Activated naive CD4-positive, alpha-beta T cell treated with anti-CD3 and anti-CD28 coated beads for 36 hours (primary cell): ENCODE measurements at regions of chr3 and their contacts with region 1.

Region 1: DNA sequence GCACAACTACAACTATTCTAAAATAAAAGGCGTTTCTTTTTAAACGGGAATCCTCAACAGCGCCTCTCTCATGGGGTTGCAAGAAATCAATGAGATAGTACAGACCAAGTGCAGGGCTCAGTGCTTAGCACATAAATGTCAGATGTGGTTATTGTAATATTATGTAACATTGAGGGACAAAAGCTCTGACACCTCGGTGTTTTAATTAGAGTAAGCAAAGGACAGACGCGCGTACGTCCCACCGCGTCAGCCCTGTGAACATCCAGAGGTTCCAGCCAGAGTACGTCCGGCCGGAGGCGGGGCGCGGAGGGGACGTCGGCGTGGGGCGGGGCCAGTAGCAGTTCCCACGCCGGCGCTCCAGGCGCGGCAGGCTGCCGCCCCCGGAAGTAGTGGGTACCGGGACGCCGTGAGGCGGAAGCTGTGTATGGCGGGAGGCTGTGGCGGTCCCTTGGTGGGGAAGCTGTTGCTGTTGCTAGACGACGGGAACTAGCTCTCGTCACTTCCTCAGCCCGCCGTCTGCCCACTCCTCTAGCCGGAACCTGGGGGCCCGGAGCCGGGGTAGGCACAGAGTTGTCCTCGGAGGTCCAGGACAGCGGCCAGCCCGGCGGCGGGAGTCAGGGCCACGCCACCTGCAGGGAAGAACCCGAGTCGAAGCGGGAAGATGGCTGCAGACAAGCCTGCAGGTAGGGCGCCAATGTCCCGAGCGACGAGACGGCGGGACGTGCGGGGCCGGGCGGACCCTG is at the start of gene CNOT10:
- DNase-seq: peak; percentile 97
- H3K4me3 Mint-ChIP-seq: peak within 1 kb of the TSS; percentile 90
- H3K27ac Mint-ChIP-seq: peak within 1 kb of the TSS; percentile 86
- H3K4me1 Mint-ChIP-seq: peaks cover 32% of the 10 kb centered on the region
- H3K27me3 Mint-ChIP-seq: no peaks in the 10 kb centered on the region
- total RNA-seq, gene CNOT10: 40.6 to 46.5 TPM

Region 2: DNA sequence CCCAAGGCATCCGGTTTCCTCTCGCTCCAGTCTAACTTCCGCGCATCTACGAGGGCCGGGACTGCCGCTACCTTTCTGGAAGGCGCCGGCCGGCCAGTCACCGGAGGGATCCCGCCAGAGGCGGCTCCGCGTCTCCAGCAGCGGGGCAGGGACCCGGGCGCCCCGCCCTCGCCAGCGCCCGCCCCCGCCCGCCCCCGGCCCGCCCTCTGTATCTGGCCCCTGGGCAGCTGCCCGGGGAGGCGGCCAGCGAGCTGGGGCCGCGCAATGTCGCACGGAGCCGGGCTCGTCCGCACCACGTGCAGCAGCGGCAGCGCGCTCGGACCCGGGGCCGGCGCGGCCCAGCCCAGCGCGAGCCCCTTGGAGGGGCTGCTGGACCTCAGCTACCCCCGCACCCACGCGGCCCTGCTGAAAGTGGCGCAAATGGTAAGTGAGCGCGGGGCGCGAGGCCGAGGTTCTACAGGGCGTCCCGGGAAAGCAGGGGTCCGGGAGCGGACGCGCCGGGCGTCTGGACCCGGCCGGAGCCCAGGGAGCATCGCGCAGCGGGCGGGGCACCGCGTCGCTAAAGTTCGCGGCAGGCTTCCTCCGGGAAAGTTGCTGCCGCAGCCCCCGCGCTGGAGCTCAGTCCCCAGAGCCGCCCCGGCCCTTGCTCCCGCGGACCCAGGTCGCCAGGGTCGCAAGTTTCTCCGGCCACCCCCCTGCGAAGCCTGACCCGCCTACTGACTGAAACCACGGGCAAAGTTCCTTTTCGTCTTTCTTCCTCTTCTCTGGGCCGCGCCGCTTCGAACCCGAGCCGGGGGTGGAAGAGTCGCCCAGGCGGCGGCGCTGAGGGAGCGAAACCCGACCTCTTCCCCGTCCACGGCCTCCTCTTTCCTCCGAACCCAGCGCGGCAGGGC is 293.1 kb before region 1 on chr3 and contains the start of gene CMTM7:
- CTCF ChIA-PET with region 1: no interaction called
- intact Hi-C with region 1: loop called (anchors 10 kb)
- DNase-seq: peak; percentile 82
- H3K4me3 Mint-ChIP-seq: peak within 1 kb of the TSS; percentile 95
- H3K27ac Mint-ChIP-seq: peak within 1 kb of the TSS; percentile 93
- H3K4me1 Mint-ChIP-seq: peaks cover 54% of the 10 kb centered on the region
- H3K27me3 Mint-ChIP-seq: no peaks in the 10 kb centered on the region
- total RNA-seq, gene CMTM7: 59.1 to 60.2 TPM

Region 3: DNA sequence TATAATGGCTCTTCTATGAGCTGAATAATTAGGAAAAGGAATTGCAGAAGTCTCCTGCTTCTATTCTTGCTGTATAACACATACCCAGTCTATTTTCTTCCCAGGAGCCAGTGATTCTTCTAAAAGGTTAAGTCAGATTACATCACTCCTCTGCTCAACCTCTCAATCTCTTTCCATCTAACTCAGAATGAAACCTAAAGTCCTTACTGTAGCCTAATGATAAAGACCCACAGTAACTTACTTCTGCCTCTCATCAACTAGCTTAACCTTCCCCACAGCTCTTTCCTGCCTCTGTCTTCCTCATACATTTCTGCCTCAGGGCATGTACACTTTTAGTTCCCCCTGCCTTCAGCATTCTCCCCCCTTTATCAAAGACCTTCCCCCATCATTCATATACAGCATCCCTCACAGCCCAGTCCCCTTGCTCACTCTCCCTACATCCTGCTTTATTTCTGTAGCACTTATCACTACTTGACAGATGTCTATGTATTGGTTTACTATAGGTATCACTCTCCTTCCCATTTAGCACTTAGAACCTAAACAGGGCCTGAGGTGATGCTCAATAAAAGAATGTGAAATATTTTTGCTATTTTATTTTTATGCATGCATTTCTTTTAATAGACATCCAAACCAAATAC is 153.8 kb before region 1 on chr3:
- CTCF ChIA-PET with region 1: no interaction called
- intact Hi-C with region 1: no loop called
- DNase-seq: no peak
- H3K4me3 Mint-ChIP-seq: no peak overlapping the region
- H3K27ac Mint-ChIP-seq: peak overlapping the region; percentile 59
- H3K4me1 Mint-ChIP-seq: peaks cover 11% of the 10 kb centered on the region
- H3K27me3 Mint-ChIP-seq: no peaks in the 10 kb centered on the region

Region 4: DNA sequence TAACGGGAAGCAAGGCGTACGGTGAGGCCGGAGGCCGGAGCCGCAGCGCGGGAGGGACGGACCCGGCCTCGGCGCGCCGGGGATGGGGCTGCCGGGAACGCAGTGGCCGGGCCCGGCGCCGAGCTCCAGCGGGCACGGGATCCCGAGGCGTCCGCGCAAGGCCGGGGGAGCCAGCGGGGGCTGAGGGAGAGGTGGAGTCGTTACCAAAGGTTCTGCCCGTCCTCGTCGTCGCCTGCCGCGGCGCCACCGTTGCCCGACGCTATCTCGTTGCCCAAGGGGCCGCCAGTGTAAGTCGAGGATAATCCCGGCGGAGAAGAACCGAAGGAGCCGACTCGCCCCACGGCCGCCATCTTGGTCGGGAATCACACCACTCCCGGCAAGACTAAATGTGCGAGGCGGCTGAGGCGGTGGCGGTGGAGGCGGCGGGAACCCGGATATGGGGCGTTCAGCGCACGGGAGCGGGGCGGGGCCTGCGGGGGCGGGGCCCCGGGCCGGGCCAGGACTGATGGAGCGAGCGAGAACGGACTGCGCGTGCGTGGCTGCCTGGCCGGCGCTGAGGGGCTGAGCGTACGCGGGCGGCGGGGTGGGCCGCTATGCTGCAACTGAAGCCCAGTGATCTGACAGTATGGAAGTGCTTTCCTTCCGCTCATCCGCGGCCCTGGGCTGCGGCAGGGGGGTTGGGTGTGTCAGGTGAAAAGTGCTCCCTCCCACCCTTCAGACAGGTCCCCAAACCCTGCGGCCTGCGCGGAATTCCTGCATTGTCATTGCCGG is 114.4 kb before region 1 on chr3 and contains the start of gene DYNC1LI1:
- CTCF ChIA-PET with region 1: no interaction called
- intact Hi-C with region 1: loop called (anchors 1 kb)
- DNase-seq: peak; percentile 94
- H3K4me3 Mint-ChIP-seq: peak within 1 kb of the TSS; percentile 88
- H3K27ac Mint-ChIP-seq: peak within 1 kb of the TSS; percentile 88
- H3K4me1 Mint-ChIP-seq: peaks cover 19% of the 10 kb centered on the region
- H3K27me3 Mint-ChIP-seq: no peaks in the 10 kb centered on the region
- total RNA-seq, gene DYNC1LI1: 29.8 to 33.1 TPM

Region 5: DNA sequence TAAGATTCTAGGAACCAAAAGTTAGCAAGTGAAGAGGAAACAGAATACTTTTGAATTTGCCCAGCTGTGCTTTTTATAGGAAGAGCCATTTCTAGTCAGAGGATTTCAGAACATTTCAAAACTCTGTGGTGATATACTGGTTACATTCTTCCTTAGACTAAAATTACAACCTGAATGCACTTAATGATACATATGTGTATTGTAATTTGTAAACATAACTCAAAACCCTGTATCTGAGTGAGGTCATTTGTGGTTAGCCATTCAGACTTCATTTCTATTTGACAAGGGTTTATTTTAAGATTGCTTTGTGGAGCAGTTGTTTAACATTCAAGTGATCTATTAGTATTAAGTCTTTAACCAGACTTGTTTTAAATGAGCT is 73.4 kb after region 1 on chr3:
- CTCF ChIA-PET with region 1: no interaction called
- intact Hi-C with region 1: no loop called
- DNase-seq: no peak
- H3K4me3 Mint-ChIP-seq: no peak overlapping the region
- H3K27ac Mint-ChIP-seq: no peak overlapping the region
- H3K4me1 Mint-ChIP-seq: no peaks in the 10 kb centered on the region
- H3K27me3 Mint-ChIP-seq: no peaks in the 10 kb centered on the region

Region 6: DNA sequence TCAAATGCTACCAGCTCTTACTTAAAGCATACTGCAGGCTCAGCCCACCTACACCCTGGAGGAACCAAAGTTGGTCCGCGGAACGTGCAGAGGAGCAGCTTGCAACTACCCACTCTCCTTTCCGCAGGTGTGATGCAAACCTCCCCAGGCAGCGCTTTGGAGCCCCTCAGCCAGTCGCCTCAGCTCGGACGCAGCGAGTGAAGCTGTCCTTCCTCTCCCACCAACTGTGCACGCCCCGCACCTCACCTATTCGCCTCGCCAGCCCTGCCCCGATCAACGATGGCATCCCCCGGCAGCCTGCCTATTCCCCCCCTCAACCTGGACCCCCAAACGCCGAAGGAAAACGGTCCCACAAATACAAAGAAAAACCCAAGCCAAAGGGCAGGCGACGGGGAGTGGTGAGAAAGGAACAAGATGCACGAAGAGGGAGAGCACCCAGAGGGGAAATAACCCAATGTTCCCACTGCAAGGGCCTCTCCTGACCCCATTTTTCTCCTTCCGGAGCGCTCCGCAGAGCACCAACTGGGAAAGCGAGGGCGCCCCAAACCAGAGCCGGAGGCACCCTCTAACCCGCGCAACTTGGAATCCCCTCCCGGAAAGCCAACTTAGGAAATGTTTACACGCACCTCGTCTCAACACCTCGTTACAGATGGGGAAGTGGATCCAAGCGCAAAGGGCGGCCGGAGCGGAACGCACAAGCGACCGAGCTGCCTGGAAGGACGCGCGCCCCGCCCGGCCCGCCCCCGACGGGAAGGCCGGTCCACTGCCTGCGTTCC is 411.3 kb after region 1 on chr3:
- CTCF ChIA-PET with region 1: no interaction called
- intact Hi-C with region 1: loop called (anchors 2 kb)
- DNase-seq: peak; percentile 68
- H3K4me3 Mint-ChIP-seq: peak overlapping the region; percentile 98
- H3K27ac Mint-ChIP-seq: peak overlapping the region; percentile 88
- H3K4me1 Mint-ChIP-seq: peaks cover 41% of the 10 kb centered on the region
- H3K27me3 Mint-ChIP-seq: no peaks in the 10 kb centered on the region

Region 7: DNA sequence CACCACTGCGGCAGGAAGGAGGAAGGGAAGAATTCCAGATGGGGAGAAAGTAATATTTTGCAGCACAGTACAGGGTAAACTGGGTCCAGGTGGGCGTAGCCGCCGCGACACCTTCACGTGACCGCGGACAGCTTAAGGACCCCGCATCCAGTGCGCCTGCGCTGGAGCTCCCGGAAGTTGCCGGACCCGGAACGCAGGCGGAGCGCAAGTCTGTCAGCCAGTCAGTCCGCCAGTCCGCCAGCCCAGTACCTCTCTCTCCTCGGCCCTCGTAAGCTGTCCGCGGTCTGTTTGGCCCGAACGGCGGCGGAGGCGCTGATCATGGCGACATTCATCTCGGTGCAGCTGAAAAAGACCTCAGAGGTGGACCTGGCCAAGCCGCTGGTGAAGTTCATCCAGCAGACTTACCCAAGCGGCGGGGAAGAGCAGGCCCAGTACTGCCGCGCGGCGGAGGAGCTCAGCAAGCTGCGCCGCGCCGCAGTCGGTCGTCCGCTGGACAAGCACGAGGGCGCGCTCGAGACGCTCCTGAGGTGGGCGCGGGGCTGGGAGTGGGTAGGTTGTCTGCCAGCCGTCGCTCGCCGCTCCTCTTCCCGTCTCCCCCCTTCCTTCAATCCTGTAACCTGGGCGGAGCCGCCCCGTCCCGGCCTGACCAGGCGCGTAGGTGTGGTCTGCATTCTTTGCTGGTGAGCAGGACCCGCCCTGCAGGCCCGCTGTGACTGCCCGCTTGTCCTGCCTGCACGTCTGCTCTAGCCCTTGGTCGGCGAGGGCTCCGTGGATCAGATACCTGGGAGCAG is 1113.6 kb after region 1 on chr3 and contains the start of gene PDCD6IP:
- CTCF ChIA-PET with region 1: no interaction called
- intact Hi-C with region 1: loop called (anchors 10 kb)
- DNase-seq: peak; percentile 88
- H3K4me3 Mint-ChIP-seq: peak within 1 kb of the TSS; percentile 95
- H3K27ac Mint-ChIP-seq: peak within 1 kb of the TSS; percentile 83
- H3K4me1 Mint-ChIP-seq: peaks cover 56% of the 10 kb centered on the region
- H3K27me3 Mint-ChIP-seq: no peaks in the 10 kb centered on the region
- total RNA-seq, gene PDCD6IP: 126 to 127 TPM